ENCODE measurements at regions of chr10 and their contacts with region 1.

Region 1: DNA sequence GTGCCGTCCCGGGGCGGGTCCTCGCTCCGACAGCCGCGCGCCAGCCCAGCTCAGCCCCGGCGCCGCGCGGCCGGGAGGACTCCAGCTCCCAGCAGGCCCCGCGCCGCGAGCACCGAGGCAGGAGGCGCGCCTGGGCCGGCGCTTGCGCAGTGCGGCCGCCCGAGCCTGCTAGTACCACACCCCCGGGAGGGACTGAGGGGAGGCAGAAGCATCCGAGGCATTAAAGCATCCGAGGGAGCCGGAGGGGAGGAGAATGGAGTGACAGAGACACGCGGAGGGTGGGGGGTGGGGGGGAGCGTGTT is at the start of gene GRK5:
- DNase-seq: peak; percentile 93
- H3K4me3 Mint-ChIP-seq: peak within 1 kb of the TSS; percentile 72
- H3K27ac Mint-ChIP-seq: peak within 1 kb of the TSS; percentile 70
- H3K4me1 Mint-ChIP-seq: peaks cover 11% of the 10 kb centered on the region
- H3K27me3 Mint-ChIP-seq: no peaks in the 10 kb centered on the region
- CTCF ChIP-seq: no peak
- total RNA-seq, gene GRK5: 0.82 and 1.2 TPM in 2 replicates

Region 2: DNA sequence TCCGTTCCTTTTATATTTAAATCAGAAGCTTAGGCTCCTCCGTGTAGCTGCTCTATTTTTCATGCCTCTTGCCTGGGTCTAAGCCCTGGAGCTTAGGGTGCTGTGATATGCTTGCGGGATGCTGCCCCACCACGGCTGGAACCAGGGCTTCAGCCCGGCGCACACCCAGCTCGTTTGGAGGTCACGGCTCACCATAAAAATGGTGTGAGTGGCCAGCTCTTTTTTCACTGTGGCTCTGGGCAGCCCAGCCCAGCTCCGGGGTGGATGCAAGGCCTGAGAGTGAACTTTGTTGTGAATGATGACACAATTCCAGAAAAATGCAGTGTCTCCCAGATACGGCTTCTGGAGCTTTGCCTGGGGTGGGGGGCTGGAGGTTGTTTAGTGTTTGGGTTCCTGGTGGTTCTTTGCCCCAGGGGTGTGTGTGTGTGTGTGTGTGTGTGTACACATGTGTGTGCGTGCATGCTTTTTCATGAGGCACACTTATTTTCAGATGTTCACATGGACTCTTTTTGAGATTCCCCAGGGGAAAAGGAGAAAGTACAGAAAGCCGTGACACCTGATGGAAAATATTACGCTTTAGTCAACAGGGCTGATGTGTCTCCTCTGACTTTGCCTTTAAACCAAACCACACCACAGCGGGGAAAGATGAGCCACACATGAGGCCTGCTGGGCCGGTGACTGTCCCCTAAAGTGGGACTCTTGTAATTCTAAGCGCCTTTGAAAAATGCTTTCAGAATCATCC is 46.3 kb after region 1 on chr10:
- CTCF ChIA-PET with region 1: interaction called, 3 read pairs
- POLR2A ChIA-PET with region 1: interaction called, 4 read pairs
- intact Hi-C with region 1: loop called (anchors 5 kb)
- DNase-seq: peak; percentile 72
- H3K4me3 Mint-ChIP-seq: peak overlapping the region; percentile 50
- H3K27ac Mint-ChIP-seq: peak overlapping the region; percentile 89
- H3K4me1 Mint-ChIP-seq: peaks cover 25% of the 10 kb centered on the region
- H3K27me3 Mint-ChIP-seq: no peaks in the 10 kb centered on the region
- CTCF ChIP-seq: no peak

Region 3: GRCh38 chr10:119323085-119324016 is 116.0 kb after region 1 on chr10:
- CTCF ChIA-PET with region 1: interaction called, 3 read pairs
- POLR2A ChIA-PET with region 1: interaction called, 6 read pairs
- intact Hi-C with region 1: loop called (anchors 2 kb)
- DNase-seq: no peak
- H3K4me3 Mint-ChIP-seq: no peak overlapping the region
- H3K27ac Mint-ChIP-seq: no peak overlapping the region
- H3K4me1 Mint-ChIP-seq: peaks cover 5% of the 10 kb centered on the region
- H3K27me3 Mint-ChIP-seq: no peaks in the 10 kb centered on the region
- CTCF ChIP-seq: no peak

Region 4: DNA sequence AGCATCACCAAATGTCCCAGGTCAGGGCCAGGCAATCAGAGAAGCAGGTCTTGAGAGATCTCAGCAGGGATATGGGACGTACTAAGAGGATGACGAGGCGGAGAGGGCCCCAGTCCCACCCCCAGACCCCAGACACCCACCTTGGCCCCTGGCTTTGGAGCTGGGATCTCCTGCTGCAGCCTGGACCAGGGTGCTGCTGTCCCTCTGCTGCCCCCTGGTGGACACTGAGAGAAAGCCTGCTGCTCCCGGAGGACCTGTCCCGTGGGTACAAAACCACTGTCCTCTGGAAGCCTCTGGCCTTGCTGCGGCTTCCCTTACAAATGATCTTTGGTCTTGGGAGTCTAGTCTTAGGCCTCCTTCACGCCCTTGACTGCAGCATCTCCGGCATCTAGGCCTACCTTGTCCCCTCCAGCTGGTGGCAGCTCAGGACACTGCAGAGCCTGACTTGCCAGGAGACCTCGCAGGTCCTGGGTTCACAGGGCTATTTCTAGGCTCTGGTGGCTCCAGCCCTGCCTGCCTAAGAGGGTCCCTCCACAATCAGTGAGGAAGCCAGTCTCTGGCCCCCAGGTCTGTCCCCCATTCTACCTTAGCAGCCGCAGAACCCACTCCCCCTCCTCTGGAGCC is 238.1 kb after region 1 on chr10:
- CTCF ChIA-PET with region 1: interaction called, 17 read pairs
- POLR2A ChIA-PET with region 1: interaction called, 5 read pairs
- intact Hi-C with region 1: loop called (anchors 1 kb)
- DNase-seq: peak; percentile 80
- H3K4me3 Mint-ChIP-seq: no peak overlapping the region
- H3K27ac Mint-ChIP-seq: no peak overlapping the region
- H3K4me1 Mint-ChIP-seq: peaks cover 10% of the 10 kb centered on the region
- H3K27me3 Mint-ChIP-seq: no peaks in the 10 kb centered on the region
- CTCF ChIP-seq: peak; percentile 93

Region 5: GRCh38 chr10:119596537-119597404 is 389.5 kb after region 1 on chr10 and contains the start of gene TIAL1:
- CTCF ChIA-PET with region 1: interaction called, 5 read pairs
- POLR2A ChIA-PET with region 1: no interaction called
- intact Hi-C with region 1: loop called (anchors 10 kb)
- DNase-seq: peak; percentile 99
- H3K4me3 Mint-ChIP-seq: peak within 1 kb of the TSS; percentile 77
- H3K27ac Mint-ChIP-seq: peak within 1 kb of the TSS; percentile 87
- H3K4me1 Mint-ChIP-seq: peaks cover 22% of the 10 kb centered on the region
- H3K27me3 Mint-ChIP-seq: no peaks in the 10 kb centered on the region
- CTCF ChIP-seq: no peak
- total RNA-seq, gene TIAL1: 117 and 149 TPM in 2 replicates

Region 6: GRCh38 chr10:119803264-119803663 is 595.9 kb after region 1 on chr10:
- CTCF ChIA-PET with region 1: no interaction called
- POLR2A ChIA-PET with region 1: no interaction called
- intact Hi-C with region 1: no loop called
- DNase-seq: peak; percentile 1
- H3K4me3 Mint-ChIP-seq: no peak overlapping the region
- H3K27ac Mint-ChIP-seq: no peak overlapping the region
- H3K4me1 Mint-ChIP-seq: no peaks in the 10 kb centered on the region
- H3K27me3 Mint-ChIP-seq: no peaks in the 10 kb centered on the region
- CTCF ChIP-seq: no peak

Measured in MCF 10A (cell line).